Activated naive CD4-positive, alpha-beta T cell treated with anti-CD3 and anti-CD28 coated beads, Interleukin-2, amount 10 ng/mL, durations not matched to agents 7 days and 5 days (primary cell): ENCODE measurements at regions of chr2 and their contacts with region 1.

Region 1: DNA sequence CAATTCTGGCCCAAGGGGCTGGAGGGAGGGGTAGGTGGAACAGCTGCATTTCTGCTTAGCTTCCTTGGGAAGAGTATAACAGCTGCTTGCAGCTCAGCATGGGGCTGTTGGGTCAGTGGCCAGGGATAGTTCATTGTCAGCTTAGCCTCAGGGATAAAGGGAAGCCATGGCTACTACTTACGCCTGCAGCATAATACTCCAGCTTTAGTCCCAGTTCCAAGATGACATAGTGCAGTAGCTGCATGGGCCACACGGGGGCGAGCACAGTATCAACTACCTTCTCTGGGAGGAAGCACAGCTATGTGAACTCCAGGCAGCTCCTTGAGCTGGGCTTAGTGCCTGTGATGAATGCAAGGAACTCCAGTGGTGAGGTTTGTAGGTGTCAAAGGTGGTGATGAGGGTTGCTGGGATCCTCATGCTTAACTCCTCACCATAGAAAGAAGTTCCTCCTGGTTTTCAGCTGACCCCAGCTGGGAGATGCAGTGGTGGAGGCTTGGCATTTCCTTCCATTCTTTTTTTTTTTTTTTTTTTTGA is 35.4 kb upstream of the RHOB start:
- DNase-seq: peak; percentile 84
- H3K4me3 Mint-ChIP-seq: no peak overlapping the region
- H3K27ac Mint-ChIP-seq: no peak overlapping the region
- H3K4me1 Mint-ChIP-seq: peaks cover 2% of the 10 kb centered on the region
- H3K27me3 Mint-ChIP-seq: peaks cover 53% of the 10 kb centered on the region

Region 2: DNA sequence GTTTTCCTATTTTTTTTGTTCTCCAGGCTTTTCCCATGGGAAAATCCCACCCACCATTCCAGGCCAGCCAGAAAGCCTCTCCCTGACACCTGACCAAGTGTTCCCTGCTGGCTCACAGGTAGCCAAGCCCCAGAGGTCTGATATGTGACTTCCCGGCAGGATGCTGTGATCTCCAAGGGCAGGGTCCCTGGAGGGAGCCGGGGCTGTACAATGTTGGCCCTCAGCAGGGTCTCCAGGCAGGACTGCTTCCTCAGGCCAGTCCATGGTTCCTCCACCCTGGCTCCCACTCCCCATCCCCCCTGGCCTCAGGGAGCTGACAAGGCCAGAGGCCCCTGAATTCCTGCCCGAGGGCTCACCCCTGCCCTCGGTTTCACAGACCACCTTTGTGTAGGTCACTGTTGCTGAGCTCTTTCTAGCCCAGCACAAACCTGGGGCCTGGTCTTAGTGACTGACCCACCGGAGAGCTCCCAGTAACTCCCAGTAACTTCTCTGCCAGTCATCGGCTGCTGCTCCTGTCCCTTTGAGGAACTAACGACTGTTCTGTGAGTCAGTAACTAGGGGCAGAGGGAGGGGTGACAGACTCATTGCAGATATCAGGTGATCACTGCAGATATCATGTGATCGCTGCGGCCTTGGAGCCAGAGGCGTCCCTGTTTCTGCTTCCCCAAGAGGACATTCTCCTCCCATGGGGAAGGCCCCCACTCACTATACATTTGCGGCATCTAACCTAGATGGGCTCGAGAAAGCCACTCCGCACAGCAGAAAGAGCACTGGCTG is 225.2 kb before region 1 on chr2:
- CTCF ChIA-PET with region 1: no interaction called
- DNase-seq: no peak
- H3K4me3 Mint-ChIP-seq: no peak overlapping the region
- H3K27ac Mint-ChIP-seq: no peak overlapping the region
- H3K4me1 Mint-ChIP-seq: no peaks in the 10 kb centered on the region
- H3K27me3 Mint-ChIP-seq: peaks cover 24% of the 10 kb centered on the region

Region 3: DNA sequence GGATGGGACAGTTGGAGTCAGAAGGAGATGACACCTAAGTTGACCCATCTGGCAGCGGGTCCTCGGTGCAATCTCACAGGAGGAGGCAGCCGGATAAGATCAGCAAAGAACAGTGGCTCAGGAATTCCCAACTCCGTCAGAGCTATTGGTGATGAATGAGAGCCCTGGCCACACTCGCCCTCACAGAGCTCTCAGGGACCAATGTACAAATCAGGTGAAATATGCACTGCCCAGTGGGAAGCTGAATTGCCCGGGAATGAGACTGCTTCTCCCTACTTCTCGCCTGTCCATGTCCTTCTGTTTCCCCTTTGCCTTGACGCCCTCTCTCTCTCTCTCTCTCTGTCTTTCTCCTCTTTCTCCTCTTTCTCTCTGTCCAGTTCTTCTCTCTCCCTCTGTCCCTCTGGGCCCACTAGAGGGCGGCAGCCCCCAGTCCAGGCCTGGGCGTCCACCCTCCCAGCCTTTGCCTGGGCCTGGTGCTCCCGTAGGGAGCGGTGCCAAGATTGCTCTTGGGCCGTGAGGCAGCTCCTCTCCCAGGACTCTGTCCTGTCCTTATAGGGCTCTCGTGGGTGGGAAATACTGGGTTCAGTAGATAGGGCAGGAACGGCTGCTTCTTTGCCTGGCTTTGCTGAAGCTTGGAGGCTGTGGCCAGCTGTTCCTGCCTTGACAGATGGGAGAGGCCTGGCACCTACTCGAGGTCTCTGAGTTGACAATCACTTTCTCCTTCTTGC is 32.5 kb before region 1 on chr2:
- CTCF ChIA-PET with region 1: interaction called, 14 read pairs
- DNase-seq: no peak
- H3K4me3 Mint-ChIP-seq: no peak overlapping the region
- H3K27ac Mint-ChIP-seq: no peak overlapping the region
- H3K4me1 Mint-ChIP-seq: peaks cover 3% of the 10 kb centered on the region
- H3K27me3 Mint-ChIP-seq: peaks cover 39% of the 10 kb centered on the region

Region 4: DNA sequence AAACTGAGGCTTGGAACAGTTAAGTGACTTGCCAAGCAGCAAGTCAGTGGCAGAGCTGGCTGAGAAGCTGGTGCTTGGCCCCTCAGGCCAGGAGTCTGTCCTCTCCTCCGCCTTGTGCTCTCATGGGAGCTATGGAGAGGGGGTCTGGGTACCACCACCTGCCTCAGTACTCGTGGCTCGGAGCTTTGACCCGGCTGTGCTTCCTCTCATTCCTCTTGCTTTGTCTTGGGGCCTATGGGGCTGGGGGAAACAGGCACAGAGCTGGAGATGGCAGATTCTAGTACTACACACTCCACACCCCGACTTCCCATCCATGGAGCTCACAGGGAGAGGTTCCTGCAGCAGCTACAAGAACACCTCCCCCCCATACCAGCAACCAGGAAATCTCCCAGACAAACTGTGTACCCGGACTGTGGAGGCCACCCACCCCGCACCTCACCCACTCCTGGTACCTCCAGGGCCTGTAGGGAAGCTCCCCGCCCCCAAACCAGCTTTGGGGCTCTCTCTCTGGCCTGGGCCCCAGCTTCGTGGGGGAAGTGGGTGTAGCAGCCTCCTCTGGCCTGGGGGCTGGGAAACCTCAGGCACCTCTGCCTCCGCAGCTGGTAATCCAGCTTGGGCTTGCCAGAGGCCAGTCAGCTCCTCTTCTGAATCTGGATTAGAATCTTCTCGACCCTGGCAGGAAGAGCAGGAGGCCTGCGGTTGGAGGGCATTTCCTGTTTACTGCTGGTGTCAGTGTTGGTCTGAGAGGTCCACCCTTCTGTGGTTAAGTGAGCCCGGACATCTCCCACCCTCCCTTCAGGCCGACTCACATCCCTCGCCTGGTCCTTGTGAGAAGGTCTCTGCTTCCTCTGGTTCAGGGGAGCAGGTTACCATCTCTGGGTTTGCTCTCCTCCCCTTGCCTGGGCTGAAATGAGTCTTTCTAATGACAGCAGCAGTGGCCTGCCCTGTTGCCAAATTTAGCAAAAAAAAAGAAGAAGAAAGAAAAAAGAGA is 13.2 kb after region 1 on chr2:
- CTCF ChIA-PET with region 1: interaction called, 82 read pairs
- DNase-seq: peak; percentile 49
- H3K4me3 Mint-ChIP-seq: no peak overlapping the region
- H3K27ac Mint-ChIP-seq: peak overlapping the region; percentile 85
- H3K4me1 Mint-ChIP-seq: peaks cover 26% of the 10 kb centered on the region
- H3K27me3 Mint-ChIP-seq: peaks cover 25% of the 10 kb centered on the region

Region 5: DNA sequence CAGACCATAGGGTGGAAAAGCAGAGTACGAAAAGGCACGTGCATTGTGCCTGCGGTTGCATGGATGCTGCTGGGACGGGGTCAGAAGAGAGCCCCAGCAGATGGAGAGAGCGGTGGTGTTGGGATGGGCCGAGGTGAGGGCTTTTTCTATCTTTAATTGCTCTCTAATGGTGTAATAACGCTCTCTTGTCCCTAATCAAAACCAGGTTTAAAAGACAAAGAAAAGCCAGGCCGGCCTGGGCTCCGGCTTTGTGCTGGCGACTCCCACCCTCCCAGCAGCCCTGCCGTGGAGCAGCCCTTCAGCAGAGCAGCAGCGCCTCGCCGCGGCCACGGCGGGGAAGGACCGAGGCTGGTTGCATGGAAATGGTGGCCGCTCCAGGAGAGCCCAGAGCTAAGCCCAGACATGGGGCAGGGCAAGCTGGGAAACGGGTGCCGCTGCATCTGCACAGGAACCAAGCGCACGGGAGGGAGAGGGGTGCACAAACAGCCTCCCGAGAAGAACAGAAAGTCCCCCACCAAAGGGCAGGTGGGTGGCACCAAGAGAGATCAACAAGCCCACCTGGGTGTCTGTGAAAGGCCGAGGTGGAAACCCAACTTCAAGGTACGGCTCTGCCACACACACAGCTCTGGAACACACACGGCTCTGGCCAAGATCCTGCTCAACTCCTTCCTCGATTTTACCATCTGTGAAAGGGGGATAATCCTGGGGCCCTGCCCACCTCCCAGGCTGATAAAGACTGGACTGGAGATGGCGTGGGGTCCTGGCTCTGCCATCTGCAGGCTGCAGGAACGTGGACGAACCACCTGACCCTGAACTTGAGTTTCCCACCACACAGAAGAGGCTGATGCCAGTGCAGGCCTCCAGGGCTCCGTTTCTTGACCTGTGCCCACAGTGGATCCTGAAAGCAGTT is 224.5 kb after region 1 on chr2:
- CTCF ChIA-PET with region 1: interaction called, 52 read pairs
- DNase-seq: peak; percentile 53
- H3K4me3 Mint-ChIP-seq: no peak overlapping the region
- H3K27ac Mint-ChIP-seq: no peak overlapping the region
- H3K4me1 Mint-ChIP-seq: peaks cover 4% of the 10 kb centered on the region
- H3K27me3 Mint-ChIP-seq: no peaks in the 10 kb centered on the region

Region 6: GRCh38 chr2:20650880-20651730 is 239.7 kb after region 1 on chr2 and contains the start of gene HS1BP3:
- CTCF ChIA-PET with region 1: interaction called, 12 read pairs
- DNase-seq: peak; percentile 87
- H3K4me3 Mint-ChIP-seq: peak within 1 kb of the TSS; percentile 87
- H3K27ac Mint-ChIP-seq: peak within 1 kb of the TSS; percentile 88
- H3K4me1 Mint-ChIP-seq: peaks cover 37% of the 10 kb centered on the region
- H3K27me3 Mint-ChIP-seq: peaks cover 18% of the 10 kb centered on the region